CD4-positive, alpha-beta T cell (primary cell): ENCODE measurements at regions of chr1 and their contacts with region 1.

Region 1: GRCh38 chr1:12658531-12659453 is 14.9 kb downstream of the AADACL4 start:
- DNase-seq: peak; percentile 51 to 85 (median 60)
- ATAC-seq: peak; percentile 68
- H3K4me3 ChIP-seq: no peak overlapping the region
- H3K4me3 Mint-ChIP-seq: no peak overlapping the region
- H3K27ac ChIP-seq: no peak overlapping the region
- H3K27ac Mint-ChIP-seq: no peak overlapping the region
- H3K4me1 ChIP-seq: peaks cover 3% of the 10 kb centered on the region
- H3K4me1 Mint-ChIP-seq: peaks cover 3% of the 10 kb centered on the region
- H3K27me3 ChIP-seq: no peaks in the 10 kb centered on the region
- H3K27me3 Mint-ChIP-seq: no peaks in the 10 kb centered on the region
- CTCF ChIP-seq: peak; percentile 92

Region 2: DNA sequence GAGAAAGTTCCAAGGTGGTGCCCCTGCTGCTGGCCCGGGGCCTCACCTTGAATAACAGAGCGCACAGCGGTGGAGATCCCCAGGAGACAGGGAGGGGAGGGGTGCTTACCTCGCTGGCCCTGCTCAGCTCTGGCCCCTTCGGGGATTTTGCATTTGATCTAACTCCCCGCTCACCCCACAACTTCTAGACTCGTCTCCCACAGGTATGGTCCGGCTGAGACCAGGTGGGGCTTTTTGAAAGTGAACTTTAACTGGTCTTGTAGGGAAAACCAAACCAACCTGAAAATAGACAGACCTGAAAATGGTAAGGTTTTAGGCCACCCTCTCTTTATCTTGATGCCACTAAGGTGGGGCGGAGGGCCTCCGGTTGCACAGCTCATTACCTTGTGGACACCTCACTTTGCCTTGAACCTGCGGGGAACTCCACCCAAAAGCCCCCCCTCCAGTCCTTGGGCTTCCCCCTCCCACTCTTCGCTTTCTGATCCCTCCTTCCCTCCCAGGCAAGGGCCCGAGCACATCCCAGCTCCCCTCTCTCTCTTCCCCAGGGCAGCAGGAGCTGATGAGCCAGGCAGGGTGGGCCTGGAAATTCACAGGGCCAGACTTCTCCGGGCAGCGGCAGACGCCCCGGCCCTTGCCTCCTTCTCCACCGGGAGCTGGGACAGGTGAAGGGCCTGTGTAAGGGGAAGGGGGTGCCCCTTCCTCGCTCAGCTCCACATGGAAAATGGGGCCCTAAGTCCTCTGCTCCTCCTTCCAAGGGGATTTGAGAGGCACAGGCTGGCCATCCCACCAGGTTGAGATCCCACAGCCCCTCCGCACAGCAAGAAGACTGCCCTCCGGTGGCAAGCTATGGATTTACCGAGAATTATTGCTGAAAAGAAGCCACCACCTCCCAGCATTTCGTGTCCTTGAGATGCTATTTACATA is 579.6 kb before region 1 on chr1:
- CTCF ChIA-PET with region 1: no interaction called
- POLR2A ChIA-PET with region 1: no interaction called
- intact Hi-C with region 1: no loop called
- DNase-seq: peak in 6 of 14 experiments; percentile 22 to 58 (median 42)
- ATAC-seq: peak; percentile 41
- H3K4me3 ChIP-seq: peak overlapping the region; percentile 12
- H3K4me3 Mint-ChIP-seq: peak overlapping the region; percentile 20
- H3K27ac ChIP-seq: no peak overlapping the region
- H3K27ac Mint-ChIP-seq: no peak overlapping the region
- H3K4me1 ChIP-seq: peaks cover 24% of the 10 kb centered on the region
- H3K4me1 Mint-ChIP-seq: peaks cover 25% of the 10 kb centered on the region
- H3K27me3 ChIP-seq: no peaks in the 10 kb centered on the region
- H3K27me3 Mint-ChIP-seq: no peaks in the 10 kb centered on the region
- CTCF ChIP-seq: no peak

Region 3: GRCh38 chr1:12113433-12114339 is 545.1 kb before region 1 on chr1:
- CTCF ChIA-PET with region 1: no interaction called
- POLR2A ChIA-PET with region 1: no interaction called
- intact Hi-C with region 1: loop called (anchors 5 to 10 kb)
- DNase-seq: no peak
- ATAC-seq: no peak
- H3K4me3 ChIP-seq: no peak overlapping the region
- H3K4me3 Mint-ChIP-seq: no peak overlapping the region
- H3K27ac ChIP-seq: no peak overlapping the region
- H3K27ac Mint-ChIP-seq: no peak overlapping the region
- H3K4me1 ChIP-seq: peaks cover 8% of the 10 kb centered on the region
- H3K4me1 Mint-ChIP-seq: no peaks in the 10 kb centered on the region
- H3K27me3 ChIP-seq: no peaks in the 10 kb centered on the region
- H3K27me3 Mint-ChIP-seq: no peaks in the 10 kb centered on the region
- CTCF ChIP-seq: no peak

Region 4: DNA sequence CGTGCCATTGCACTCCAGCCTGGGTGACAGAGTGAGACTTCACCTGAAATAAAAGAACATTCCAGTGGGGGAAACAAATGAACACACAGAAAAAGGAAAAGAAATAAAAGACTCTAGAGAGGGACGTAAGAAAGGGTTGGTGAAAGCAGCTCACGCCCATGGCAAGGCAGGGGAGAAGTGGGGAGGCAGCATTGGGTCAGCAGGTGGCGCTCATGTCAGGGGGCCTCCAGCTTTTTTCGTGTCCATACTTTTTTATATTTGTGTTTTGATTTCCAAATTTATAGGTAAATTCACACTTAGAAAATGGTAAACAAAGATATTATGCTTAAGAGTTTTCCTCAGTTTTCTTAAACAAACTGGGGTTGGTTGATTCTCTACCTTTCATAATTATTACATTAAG is 383.4 kb before region 1 on chr1:
- CTCF ChIA-PET with region 1: interaction called, 5 read pairs
- POLR2A ChIA-PET with region 1: no interaction called
- intact Hi-C with region 1: loop called (anchors 1 to 2 kb)
- DNase-seq: peak; percentile 13 to 50 (median 24)
- ATAC-seq: no peak
- H3K4me3 ChIP-seq: no peak overlapping the region
- H3K4me3 Mint-ChIP-seq: no peak overlapping the region
- H3K27ac ChIP-seq: no peak overlapping the region
- H3K27ac Mint-ChIP-seq: no peak overlapping the region
- H3K4me1 ChIP-seq: no peaks in the 10 kb centered on the region
- H3K4me1 Mint-ChIP-seq: peaks cover 5% of the 10 kb centered on the region
- H3K27me3 ChIP-seq: no peaks in the 10 kb centered on the region
- H3K27me3 Mint-ChIP-seq: no peaks in the 10 kb centered on the region
- CTCF ChIP-seq: peak; percentile 59

Region 5: DNA sequence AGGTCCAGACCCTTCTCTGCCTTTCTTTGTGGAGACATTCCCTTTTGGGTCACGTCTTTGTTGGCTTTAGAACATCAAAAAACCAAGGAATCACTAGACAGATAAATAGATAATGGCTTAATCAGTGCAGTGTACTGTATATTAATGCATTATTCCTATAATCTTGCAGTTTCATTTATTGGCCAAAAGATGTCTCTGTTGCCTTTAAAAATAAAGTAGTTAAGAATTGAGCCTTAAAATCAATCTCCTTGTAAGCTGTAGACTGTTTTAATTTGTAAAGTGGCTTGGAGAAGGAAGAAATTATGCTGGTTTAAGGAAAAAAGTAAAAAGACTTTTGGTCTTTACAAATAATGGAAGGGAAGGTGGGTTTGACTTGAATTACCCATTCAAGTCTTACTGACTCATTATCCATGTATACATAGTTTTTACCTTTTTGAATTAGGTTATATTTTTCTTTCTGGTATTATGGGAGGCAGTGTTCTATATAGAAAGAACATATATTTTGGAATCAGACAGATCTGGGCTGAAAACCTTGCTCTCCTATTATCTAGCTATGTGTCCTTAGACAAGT is 344.4 kb before region 1 on chr1:
- CTCF ChIA-PET with region 1: interaction called, 17 read pairs
- POLR2A ChIA-PET with region 1: no interaction called
- intact Hi-C with region 1: loop called (anchors 1 kb)
- DNase-seq: peak in 3 of 14 experiments; percentile 29 to 38 (median 32)
- ATAC-seq: peak; percentile 59
- H3K4me3 ChIP-seq: no peak overlapping the region
- H3K4me3 Mint-ChIP-seq: no peak overlapping the region
- H3K27ac ChIP-seq: no peak overlapping the region
- H3K27ac Mint-ChIP-seq: no peak overlapping the region
- H3K4me1 ChIP-seq: no peaks in the 10 kb centered on the region
- H3K4me1 Mint-ChIP-seq: no peaks in the 10 kb centered on the region
- H3K27me3 ChIP-seq: no peaks in the 10 kb centered on the region
- H3K27me3 Mint-ChIP-seq: no peaks in the 10 kb centered on the region
- CTCF ChIP-seq: peak; percentile 68